ENCODE measurements at regions of chr3 and their contacts with region 1.

Region 1: GRCh38 chr3:12135029-12135657 is 23.6 kb downstream of the TIMP4 start:
- DNase-seq: peak; percentile 10 to 68 (median 43)
- ATAC-seq: peak; percentile 50 to 80 (median 62)
- H3K4me3 ChIP-seq: no peak overlapping the region
- H3K4me3 Mint-ChIP-seq: no peak overlapping the region
- H3K27ac ChIP-seq: no peak overlapping the region
- H3K27ac Mint-ChIP-seq: no peak overlapping the region
- H3K4me1 ChIP-seq: no peaks in the 10 kb centered on the region
- H3K4me1 Mint-ChIP-seq: peaks cover 0 to 2% (median 0%) of the 10 kb centered on the region in 3 donors
- H3K27me3 ChIP-seq: no peaks in the 10 kb centered on the region
- H3K27me3 Mint-ChIP-seq: peaks cover 12 to 13% of the 10 kb centered on the region in 2 donors

Region 2: DNA sequence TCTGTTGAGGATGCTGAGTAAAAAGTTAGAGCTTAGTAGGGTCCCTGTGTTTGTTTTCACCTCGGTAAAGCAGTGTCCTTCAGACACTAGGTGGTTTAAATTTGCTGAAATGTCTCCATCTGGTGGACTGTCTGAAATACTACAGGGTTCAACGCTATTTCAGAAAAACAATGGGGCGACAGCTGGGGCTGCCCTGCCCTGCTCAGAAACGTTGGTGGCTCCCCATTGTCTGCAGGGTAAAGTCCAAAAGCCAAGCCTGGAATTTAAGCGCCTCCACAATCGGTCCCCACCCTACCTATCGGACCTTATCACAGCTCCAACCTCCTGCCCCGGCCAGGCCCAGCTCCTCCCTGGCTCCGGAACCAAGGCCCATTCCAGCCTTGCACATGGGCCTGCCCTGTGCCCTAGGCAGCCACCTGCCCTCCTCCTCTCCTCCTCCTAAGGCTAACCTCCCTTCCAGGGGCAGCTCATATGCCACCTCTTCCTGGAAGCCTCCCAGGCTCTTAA is 344.8 kb after region 1 on chr3:
- CTCF ChIA-PET with region 1: interaction called, 14 to 35 read pairs
- POLR2A ChIA-PET with region 1: interaction called in 1 of 2 experiments, 4 read pairs
- DNase-seq: peak in 7 of 35 experiments; percentile 3 to 71 (median 13)
- ATAC-seq: no peak
- H3K4me3 ChIP-seq: no peak overlapping the region
- H3K4me3 Mint-ChIP-seq: no peak overlapping the region
- H3K27ac ChIP-seq: no peak overlapping the region
- H3K27ac Mint-ChIP-seq: no peak overlapping the region
- H3K4me1 ChIP-seq: peaks cover 14 to 23% of the 10 kb centered on the region in 2 experiments
- H3K4me1 Mint-ChIP-seq: peaks cover 17 to 26% (median 22%) of the 10 kb centered on the region in 3 donors
- H3K27me3 ChIP-seq: peaks cover 0 to 4% of the 10 kb centered on the region in 2 experiments
- H3K27me3 Mint-ChIP-seq: no peaks in the 10 kb centered on the region

Region 3: DNA sequence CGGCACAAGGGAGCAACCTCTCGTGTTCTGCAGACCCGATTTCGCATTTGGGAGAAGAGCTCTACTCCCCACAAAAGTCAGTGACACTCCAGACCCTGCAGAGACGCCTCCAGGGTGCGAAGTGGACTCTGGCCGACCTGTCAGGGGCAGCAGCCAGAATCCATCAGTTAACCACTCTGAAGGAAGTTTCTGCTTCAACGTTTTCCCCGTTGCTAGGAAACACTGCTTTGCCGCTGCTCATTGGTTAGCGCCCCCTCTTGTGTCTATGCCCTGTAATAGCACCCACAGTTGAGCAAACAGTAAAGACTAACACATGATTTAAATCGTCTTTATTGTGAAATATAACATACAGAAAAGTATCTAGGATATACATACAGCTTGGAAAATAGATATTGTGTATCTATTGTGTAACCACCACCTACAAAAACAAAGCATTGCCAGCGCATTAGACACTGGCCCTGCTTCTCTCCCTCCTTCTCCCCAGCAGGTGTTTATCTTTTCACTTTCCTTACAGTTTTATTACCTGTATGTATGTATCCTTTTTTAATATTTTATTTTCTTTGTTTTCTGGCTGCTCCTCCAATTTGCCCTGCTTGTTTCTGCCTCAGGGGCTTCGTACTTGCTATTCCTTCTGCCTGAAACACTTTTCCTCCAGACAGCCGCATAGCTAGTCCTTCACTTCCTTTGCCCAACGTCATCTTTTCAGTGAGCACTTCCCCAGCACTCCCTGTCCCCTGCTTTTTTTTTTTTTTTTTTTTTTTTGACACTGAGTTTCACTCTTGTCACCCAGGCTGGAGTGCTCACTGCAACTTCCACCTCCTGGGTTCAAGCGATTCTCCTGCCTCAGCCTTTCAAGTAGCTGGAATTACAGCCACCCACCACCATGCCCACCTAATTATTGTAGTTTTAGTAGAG is 585.1 kb after region 1 on chr3:
- CTCF ChIA-PET with region 1: no interaction called
- POLR2A ChIA-PET with region 1: interaction called in 1 of 2 experiments, 13 read pairs
- DNase-seq: peak; percentile 26 to 88 (median 67)
- ATAC-seq: peak; percentile 89 to 97 (median 96)
- H3K4me3 ChIP-seq: no peak overlapping the region
- H3K4me3 Mint-ChIP-seq: peak overlapping the region; percentile 50 to 62 (median 60)
- H3K27ac ChIP-seq: no peak overlapping the region
- H3K27ac Mint-ChIP-seq: peak overlapping the region in 1 of 2 donors; percentile 39
- H3K4me1 ChIP-seq: peaks cover 0 to 10% of the 10 kb centered on the region in 2 experiments
- H3K4me1 Mint-ChIP-seq: peaks cover 8 to 19% (median 13%) of the 10 kb centered on the region in 3 donors
- H3K27me3 ChIP-seq: peaks cover 0 to 4% of the 10 kb centered on the region in 2 experiments
- H3K27me3 Mint-ChIP-seq: peaks cover 0 to 3% of the 10 kb centered on the region in 2 donors